Endothelial cell of umbilical vein (primary cell): ENCODE measurements at regions of chr16 and their contacts with region 1.

Region 1: GRCh38 chr16:11255737-11256660 is at the start of gene SOCS1:
- DNase-seq: peak; percentile 78
- H3K4me3 ChIP-seq: peak within 1 kb of the TSS; percentile 43 to 89 (median 73)
- H3K27ac ChIP-seq: peak within 1 kb of the TSS; percentile 31
- H3K4me1 ChIP-seq: peaks cover 10% of the 10 kb centered on the region
- H3K27me3 ChIP-seq: peaks cover 0 to 1% of the 10 kb centered on the region in 2 experiments
- CTCF ChIP-seq: peak; percentile 76 to 86
- POLR2A ChIP-seq: peak; percentile 97
- total RNA-seq, gene SOCS1: 0.81 and 1.1 TPM in 2 replicates

Region 2: DNA sequence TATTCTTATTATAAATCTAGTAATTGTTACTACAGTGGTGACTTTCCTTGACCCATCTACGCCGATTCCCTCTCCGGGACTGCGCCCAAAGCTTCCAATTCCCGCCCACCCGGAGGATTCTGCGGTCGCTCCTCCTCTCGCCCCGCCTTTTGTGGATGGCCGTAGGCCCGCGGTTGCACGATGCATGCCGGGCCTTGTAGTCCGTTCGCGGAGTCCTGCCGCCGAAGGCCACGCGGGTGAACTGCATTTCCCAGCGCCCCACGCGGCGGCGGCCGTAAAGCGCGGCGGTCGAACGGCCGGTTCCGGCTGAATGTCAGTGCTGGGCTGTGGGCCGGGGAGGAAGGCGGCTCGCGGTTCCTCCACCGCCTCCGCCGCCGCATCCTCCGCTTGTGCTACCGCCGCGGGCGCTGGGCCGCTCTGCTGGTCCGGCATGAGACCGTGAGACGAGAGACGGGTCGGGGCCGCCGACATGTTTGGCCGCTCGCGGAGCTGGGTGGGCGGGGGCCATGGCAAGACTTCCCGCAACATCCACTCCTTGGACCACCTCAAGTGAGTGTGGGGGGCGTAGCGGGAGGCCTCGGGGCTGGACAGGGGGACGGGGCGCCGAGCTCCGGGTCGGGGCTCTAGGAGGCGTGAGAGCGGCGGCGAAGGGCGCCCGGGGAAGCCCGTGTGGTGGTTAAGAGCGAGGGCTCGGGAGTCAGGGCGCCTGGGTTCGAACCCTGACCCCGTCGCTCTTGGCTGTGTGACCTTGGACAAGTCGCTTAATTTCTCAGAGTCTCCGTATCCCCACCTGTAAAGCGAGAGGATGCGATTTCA is 311.5 kb before region 1 on chr16 and contains the start of gene CLEC16A:
- CTCF ChIA-PET with region 1: interaction called, 12 read pairs
- POLR2A ChIA-PET with region 1: interaction called, 3 read pairs
- dilution Hi-C with region 1: no loop called
- intact Hi-C with region 1: no loop called
- DNase-seq: peak; percentile 98
- H3K4me3 ChIP-seq: peak within 1 kb of the TSS; percentile 65 to 92 (median 80)
- H3K27ac ChIP-seq: peak within 1 kb of the TSS; percentile 57
- H3K4me1 ChIP-seq: peaks cover 36% of the 10 kb centered on the region
- H3K27me3 ChIP-seq: no peaks in the 10 kb centered on the region
- CTCF ChIP-seq: no peak
- POLR2A ChIP-seq: peak; percentile 52
- total RNA-seq, gene CLEC16A: 23.3 and 25.7 TPM in 2 replicates

Region 3: DNA sequence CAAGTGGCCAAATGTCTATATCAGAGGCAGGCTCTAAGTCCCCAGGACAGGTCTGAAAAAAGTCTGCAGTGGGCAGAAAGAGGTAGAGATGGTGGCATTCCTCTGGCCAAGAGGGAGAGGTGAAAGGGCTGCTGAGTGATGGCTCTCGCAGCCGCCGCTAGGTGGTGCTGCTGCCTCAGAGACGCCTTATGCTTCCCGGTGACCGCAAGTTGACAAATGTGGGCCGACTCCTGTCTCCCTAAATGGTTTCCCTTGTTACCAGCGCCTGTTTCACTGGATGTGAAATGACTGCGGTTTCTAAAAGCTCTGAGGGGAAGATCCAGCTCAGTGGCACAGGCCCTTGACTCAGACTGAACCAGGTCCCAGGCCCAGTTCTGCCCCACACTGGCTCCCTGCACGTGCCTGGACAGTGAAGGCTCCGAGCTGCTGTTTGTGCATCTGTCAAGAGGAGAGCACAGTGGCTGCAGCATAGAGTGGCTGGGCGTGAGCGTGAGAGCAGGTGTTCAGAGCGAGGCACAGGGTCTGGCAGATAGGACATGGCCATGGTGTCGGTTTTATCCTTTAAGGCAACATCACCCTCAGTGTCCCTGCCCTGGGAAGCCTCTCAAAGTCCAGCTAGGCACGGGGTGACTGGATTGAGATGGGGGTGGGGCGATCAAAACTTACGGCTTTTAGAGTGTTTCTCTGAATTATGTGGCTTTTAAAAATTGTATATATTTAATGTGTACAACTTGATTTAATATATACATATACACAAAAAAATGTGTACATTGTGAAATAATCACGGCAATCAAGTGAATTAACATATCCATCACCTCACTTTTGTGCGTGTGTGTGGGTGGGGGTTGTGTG is 291.7 kb before region 1 on chr16:
- CTCF ChIA-PET with region 1: interaction called, 347 read pairs
- POLR2A ChIA-PET with region 1: interaction called, 22 read pairs
- dilution Hi-C with region 1: no loop called
- intact Hi-C with region 1: loop called (anchors 1 kb)
- DNase-seq: peak; percentile 71
- H3K4me3 ChIP-seq: no peak overlapping the region
- H3K27ac ChIP-seq: no peak overlapping the region
- H3K4me1 ChIP-seq: no peaks in the 10 kb centered on the region
- H3K27me3 ChIP-seq: no peaks in the 10 kb centered on the region
- CTCF ChIP-seq: peak; percentile 92 to 96
- POLR2A ChIP-seq: no peak

Region 4: GRCh38 chr16:11049380-11050059 is 206.5 kb before region 1 on chr16:
- CTCF ChIA-PET with region 1: interaction called, 15 read pairs
- POLR2A ChIA-PET with region 1: no interaction called
- dilution Hi-C with region 1: no loop called
- intact Hi-C with region 1: no loop called
- DNase-seq: no peak
- H3K4me3 ChIP-seq: no peak overlapping the region
- H3K27ac ChIP-seq: no peak overlapping the region
- H3K4me1 ChIP-seq: peaks cover 7% of the 10 kb centered on the region
- H3K27me3 ChIP-seq: no peaks in the 10 kb centered on the region
- CTCF ChIP-seq: no peak
- POLR2A ChIP-seq: no peak

Region 5: GRCh38 chr16:11201498-11202259 is 54.3 kb before region 1 on chr16:
- CTCF ChIA-PET with region 1: interaction called, 17 read pairs
- POLR2A ChIA-PET with region 1: interaction called, 11 read pairs
- dilution Hi-C with region 1: no loop called
- intact Hi-C with region 1: loop called (anchors 2 kb)
- DNase-seq: peak; percentile 87
- H3K4me3 ChIP-seq: no peak overlapping the region
- H3K27ac ChIP-seq: peak overlapping the region; percentile 79
- H3K4me1 ChIP-seq: peaks cover 19% of the 10 kb centered on the region
- H3K27me3 ChIP-seq: no peaks in the 10 kb centered on the region
- CTCF ChIP-seq: no peak
- POLR2A ChIP-seq: no peak

Region 6: DNA sequence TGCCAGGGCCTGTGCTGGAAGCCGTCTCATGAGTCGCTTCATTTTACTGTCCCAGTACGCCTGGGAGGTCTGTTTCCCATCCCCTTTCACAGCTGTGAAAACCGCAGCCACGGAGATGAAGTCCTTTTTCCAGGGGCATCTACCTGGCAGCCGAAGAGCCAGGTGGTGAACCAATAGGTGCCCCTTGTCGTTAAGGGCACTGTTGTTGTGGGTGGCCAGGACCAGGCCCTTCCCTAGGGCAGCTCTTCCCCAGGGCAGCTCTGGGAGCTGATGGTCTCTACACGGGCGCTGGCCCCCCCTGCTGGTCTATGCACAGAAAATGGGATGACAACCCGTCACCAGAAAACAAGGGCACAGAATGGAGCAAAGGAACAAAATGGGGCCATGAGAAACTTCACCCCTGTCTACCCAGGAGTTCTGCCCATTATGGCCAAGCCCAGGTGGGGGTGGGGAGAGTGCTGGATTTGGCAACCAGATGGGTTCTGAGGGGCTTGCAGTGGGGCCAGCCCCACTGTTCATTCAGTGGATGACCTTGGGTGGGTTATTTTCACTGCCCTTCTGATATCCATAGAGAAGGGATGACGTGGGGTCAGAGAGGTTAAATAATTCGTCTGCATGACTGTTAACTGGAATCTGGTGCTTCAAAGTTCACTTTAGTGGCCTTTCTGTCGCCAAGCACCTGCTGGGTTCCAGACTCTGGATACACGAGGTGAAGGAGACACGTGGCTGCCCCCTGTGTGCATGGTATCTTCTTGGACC is 100.8 kb after region 1 on chr16:
- CTCF ChIA-PET with region 1: interaction called, 47 read pairs
- POLR2A ChIA-PET with region 1: interaction called, 4 read pairs
- dilution Hi-C with region 1: no loop called
- intact Hi-C with region 1: loop called (anchors 1 kb)
- DNase-seq: peak; percentile 51
- H3K4me3 ChIP-seq: no peak overlapping the region
- H3K27ac ChIP-seq: no peak overlapping the region
- H3K4me1 ChIP-seq: peaks cover 9% of the 10 kb centered on the region
- H3K27me3 ChIP-seq: peaks cover 0 to 4% of the 10 kb centered on the region in 2 experiments
- CTCF ChIP-seq: peak; percentile 65 to 83
- POLR2A ChIP-seq: no peak